ENCODE measurements at regions of chr7 and their contacts with region 1.

Region 1: DNA sequence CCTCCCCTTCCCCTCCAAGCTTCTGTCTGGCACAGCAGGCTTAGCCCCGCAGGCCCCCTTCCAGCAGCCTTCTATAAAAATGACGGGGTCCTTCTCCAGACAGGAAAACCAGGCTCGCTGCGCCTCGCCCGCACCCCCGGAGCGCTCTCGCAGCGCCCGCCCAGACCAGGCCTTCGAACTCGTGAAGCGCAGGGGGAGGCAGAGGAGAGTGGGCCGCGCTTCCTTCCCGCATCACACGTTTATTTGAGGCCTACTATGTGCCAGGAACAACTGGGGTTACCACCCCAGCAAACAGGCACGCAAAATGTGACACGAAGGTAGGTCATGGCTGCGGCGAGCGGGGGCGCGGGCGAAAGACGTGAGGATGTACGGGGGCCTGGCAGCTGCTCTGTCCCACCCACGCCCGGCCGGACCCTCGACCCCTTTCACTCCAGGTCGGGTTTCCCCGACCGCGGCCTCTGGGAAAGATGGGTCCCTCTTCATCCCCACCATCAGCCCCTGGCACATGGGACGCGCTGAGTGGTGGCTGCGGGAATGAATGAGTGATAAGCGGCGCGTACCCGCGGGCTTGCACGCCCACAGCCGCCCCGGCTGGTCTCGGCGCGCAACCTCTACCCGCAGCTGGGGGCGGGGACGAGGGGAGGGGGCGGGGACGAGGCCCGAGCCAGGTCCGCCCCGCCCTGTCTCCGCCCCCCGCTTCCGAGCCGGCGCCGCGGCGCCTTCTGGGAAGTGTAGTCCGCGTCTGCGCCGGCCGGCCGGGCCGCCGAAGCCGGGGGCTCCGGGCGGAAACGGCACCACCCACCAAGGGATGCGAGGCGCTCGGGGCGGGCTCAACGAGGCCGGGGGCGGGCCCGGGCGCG is 59.1 kb downstream of the ZNF467 start:
- DNase-seq: peak; percentile 47 to 93
- H3K4me3 ChIP-seq: peak overlapping the region; percentile 69 to 86
- H3K27ac ChIP-seq: peak overlapping the region; percentile 29 to 83
- H3K4me1 ChIP-seq: peaks cover 3 to 20% of the 10 kb centered on the region in 2 donors
- H3K27me3 ChIP-seq: no peaks in the 10 kb centered on the region
- CTCF ChIP-seq: no peak

Region 2: GRCh38 chr7:149284850-149285626 is 429.2 kb before region 1 on chr7:
- intact Hi-C with region 1: loop called (anchors 10 kb)
- DNase-seq: peak; percentile 79 to 96
- H3K4me3 ChIP-seq: peak overlapping the region; percentile 66 to 88
- H3K27ac ChIP-seq: peak overlapping the region; percentile 20 to 48
- H3K4me1 ChIP-seq: peaks cover 3 to 14% of the 10 kb centered on the region in 2 donors
- H3K27me3 ChIP-seq: no peaks in the 10 kb centered on the region
- CTCF ChIP-seq: no peak

Region 3: DNA sequence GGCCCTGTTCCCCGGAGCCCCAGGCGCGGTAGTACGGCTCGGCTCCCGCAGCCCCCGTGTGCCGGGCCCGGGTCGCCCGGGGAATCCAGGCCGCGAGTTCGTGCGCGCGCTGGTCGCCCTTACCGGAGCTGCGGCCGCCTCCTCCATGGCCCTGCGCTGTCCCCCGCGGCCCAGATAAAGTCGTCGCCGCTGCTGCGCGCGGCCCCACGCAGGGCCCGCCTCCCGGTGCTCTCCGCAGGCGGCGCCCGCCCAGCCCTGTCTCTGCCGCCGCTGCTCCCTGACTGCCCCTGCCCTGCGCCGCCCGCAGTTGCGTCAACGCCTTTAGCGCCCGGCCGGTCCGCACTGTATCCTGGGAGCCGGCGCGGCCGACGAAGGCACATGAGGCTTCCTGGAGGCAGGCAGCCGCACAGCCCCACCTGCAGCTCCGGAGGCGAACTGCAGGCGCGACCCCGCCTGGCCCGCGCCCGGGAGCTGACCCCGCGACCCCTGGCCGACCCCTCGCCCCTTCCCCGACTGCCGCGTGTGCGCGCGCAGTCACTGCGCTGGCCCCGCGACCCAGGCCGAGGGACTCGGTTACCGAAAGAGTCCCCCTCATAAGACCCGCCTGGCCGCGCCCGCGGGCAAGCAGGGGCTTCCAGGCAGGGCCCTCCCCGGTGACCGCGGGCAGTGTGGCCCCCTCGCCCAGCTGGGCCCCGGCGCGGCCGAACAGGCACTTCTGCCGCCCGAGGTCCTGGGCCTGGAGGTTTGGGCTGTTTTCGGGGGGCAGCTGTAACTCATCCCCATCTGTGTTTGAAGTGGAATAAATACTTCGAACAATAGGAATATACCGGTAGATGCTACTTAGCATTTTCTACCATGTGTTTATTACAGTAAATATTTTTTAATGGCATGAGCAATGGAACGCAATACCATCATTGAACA is 89.6 kb before region 1 on chr7:
- intact Hi-C with region 1: loop called (anchors 1 kb)
- DNase-seq: peak; percentile 77 to 97
- H3K4me3 ChIP-seq: peak overlapping the region; percentile 91 to 98
- H3K27ac ChIP-seq: peak overlapping the region; percentile 84 to 90
- H3K4me1 ChIP-seq: peaks cover 0 to 7% of the 10 kb centered on the region in 2 donors
- H3K27me3 ChIP-seq: no peaks in the 10 kb centered on the region
- CTCF ChIP-seq: peak; percentile 92 to 98 (median 93)

Region 4: DNA sequence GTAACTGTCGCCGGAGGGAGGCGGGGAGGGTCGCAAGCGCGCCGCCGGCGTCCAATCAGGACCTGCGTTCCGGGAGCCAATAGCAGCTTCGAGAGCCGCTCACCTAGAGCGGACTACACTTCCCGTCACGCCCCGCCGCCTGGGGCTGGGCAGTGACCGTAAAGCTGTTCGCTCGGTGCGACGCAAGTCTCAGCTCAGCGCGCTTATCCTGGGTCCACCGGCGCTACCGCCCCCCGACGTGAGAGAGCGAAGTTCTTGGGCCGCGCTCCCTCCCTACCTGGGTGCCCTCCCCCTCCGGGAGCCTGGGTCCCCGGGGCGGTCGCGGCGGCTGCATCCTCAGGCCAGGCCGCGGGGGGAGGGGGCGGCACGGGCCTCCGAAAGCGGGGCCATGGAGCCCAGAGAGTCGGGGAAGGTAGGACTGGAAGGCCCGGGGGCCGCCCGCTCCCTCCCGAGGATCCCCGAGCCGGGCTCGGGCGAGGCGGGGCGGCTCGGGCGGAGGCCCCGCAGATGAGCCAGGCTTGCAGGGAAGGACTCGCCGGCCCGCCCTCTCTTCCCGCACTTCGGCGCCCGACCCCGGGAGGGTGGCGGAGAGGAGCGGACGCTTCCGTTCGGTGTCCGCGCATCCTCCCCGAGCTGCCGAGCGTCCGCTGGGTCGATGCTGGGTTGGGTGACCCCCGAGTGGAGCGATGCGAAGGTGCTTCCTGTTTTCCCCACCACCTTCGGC is 124.1 kb after region 1 on chr7 and contains the start of gene ZNF862:
- intact Hi-C with region 1: loop called (anchors 1 kb)
- DNase-seq: peak; percentile 92 to 98
- H3K4me3 ChIP-seq: peak within 1 kb of the TSS; percentile 84 to 94
- H3K27ac ChIP-seq: peak within 1 kb of the TSS; percentile 86 to 93
- H3K4me1 ChIP-seq: peaks cover 0 to 8% of the 10 kb centered on the region in 2 donors
- H3K27me3 ChIP-seq: no peaks in the 10 kb centered on the region
- CTCF ChIP-seq: no peak
- total RNA-seq, gene ZNF862: 1.7 TPM

Region 5: GRCh38 chr7:150378853-150379440 is 664.7 kb after region 1 on chr7 and contains the start of gene ZNF775:
- intact Hi-C with region 1: loop called (anchors 10 kb)
- DNase-seq: peak; percentile 88 to 98
- H3K4me3 ChIP-seq: peak within 1 kb of the TSS; percentile 61 to 93
- H3K27ac ChIP-seq: peak within 1 kb of the TSS; percentile 79 to 85
- H3K4me1 ChIP-seq: peaks cover 0 to 6% of the 10 kb centered on the region in 2 donors
- H3K27me3 ChIP-seq: no peaks in the 10 kb centered on the region
- CTCF ChIP-seq: no peak
- total RNA-seq, gene ZNF775: 17.1 TPM